ENCODE measurements at regions of chr12 and their contacts with region 1.

Region 1: GRCh38 chr12:111396726-111397445 is 8.8 kb upstream of the SH2B3 start:
- DNase-seq: peak; percentile 65
- ATAC-seq: peak; percentile 89
- H3K4me3 ChIP-seq: peak overlapping the region; percentile 33 to 48
- H3K27ac ChIP-seq: no peak overlapping the region
- H3K4me1 ChIP-seq: peaks cover 12 to 40% of the 10 kb centered on the region in 2 experiments; a peak in 3 of 4 replicates
- H3K27me3 ChIP-seq: no peaks in the 10 kb centered on the region
- CTCF ChIP-seq: peak in 2 of 3 experiments; percentile 96 to 99; a peak in 4 of 6 replicates
- POLR2A ChIP-seq: no peak
- RAD21 ChIP-seq: no peak

Region 2: DNA sequence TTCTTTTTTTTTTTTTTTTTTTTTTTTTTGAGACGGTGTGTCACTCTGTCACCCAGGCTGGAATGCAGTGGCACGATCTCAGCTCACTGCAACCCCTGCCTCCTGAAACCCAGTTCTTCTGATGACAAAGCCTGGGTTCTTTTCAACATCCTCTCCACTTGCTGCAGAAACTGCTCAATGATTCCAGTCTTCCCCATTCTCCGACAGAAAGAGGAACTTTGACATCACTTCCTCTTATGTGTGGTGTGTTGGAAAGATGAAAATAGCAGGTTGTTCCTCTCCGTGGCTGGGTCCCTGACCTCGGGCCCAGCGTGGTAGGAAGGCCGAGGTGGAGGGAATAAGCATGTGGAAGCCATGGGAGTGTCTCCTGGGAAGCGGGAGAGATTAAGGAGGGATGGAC is 226.3 kb before region 1 on chr12:
- CTCF ChIA-PET with region 1: no interaction called
- POLR2A ChIA-PET with region 1: no interaction called
- RAD21 ChIA-PET with region 1: no interaction called
- intact Hi-C with region 1: no loop called
- DNase-seq: no peak
- ATAC-seq: no peak
- H3K4me3 ChIP-seq: no peak overlapping the region
- H3K27ac ChIP-seq: no peak overlapping the region
- H3K4me1 ChIP-seq: no peaks in the 10 kb centered on the region
- H3K27me3 ChIP-seq: peaks cover 37% of the 10 kb centered on the region; the same call in 1 of the 2 replicates
- CTCF ChIP-seq: no peak
- POLR2A ChIP-seq: no peak
- RAD21 ChIP-seq: no peak

Region 3: DNA sequence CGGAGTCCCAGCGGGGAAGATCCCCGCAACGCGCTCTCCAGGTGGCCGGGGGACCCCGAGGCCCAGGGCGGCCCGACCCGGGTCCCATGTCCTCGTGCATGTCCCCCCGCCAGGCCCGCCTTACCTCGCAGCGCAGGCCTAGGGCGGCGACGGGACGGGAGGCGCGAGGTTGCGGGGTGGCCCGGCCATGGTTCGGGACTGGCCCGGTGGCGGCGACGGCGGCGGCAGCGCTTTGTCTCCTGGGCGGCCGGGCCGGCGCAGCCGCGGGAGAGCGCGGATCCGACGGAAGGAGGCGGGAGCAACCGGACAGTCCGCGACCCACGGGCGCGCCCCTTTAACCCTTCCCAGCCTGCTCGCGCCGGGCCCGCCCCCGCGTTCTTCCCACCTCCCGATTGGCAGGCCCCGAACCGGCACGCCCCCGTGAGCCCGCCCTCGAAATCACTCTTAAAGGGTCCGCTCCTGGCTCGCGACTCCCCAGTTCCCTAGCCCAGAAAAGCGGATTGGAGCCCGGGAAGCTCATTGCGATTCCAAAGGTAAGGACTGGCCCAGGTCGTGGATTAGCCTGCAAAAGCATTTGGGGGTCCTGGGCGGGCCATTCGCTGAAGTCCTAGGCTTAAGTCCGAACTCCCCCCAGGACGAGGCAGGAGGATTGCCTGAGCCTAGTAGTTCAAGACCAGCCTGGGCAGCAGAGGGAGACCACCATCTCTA is 27.9 kb before region 1 on chr12 and contains the start of gene PHETA1:
- CTCF ChIA-PET with region 1: interaction called, 11 read pairs
- POLR2A ChIA-PET with region 1: no interaction called
- RAD21 ChIA-PET with region 1: interaction called in 1 of 2 experiments, 8 read pairs
- intact Hi-C with region 1: no loop called
- DNase-seq: peak; percentile 55
- ATAC-seq: peak; percentile 91
- H3K4me3 ChIP-seq: peak within 1 kb of the TSS; percentile 73 to 83
- H3K27ac ChIP-seq: peak within 1 kb of the TSS; percentile 46; the same call in 1 of the 2 replicates
- H3K4me1 ChIP-seq: peaks cover 4 to 25% of the 10 kb centered on the region in 2 experiments; a peak in 3 of 4 replicates
- H3K27me3 ChIP-seq: no peaks in the 10 kb centered on the region
- CTCF ChIP-seq: no peak
- POLR2A ChIP-seq: no peak
- RAD21 ChIP-seq: no peak
- total RNA-seq, gene PHETA1: 10.6 TPM

Region 4: GRCh38 chr12:111412007-111412829 is 15.3 kb after region 1 on chr12:
- CTCF ChIA-PET with region 1: interaction called, 14 read pairs
- POLR2A ChIA-PET with region 1: no interaction called
- RAD21 ChIA-PET with region 1: no interaction called
- intact Hi-C with region 1: no loop called
- DNase-seq: no peak
- ATAC-seq: no peak
- H3K4me3 ChIP-seq: no peak overlapping the region
- H3K27ac ChIP-seq: no peak overlapping the region
- H3K4me1 ChIP-seq: peaks cover 29 to 69% of the 10 kb centered on the region in 2 experiments
- H3K27me3 ChIP-seq: no peaks in the 10 kb centered on the region
- CTCF ChIP-seq: no peak
- POLR2A ChIP-seq: no peak
- RAD21 ChIP-seq: no peak

Region 5: DNA sequence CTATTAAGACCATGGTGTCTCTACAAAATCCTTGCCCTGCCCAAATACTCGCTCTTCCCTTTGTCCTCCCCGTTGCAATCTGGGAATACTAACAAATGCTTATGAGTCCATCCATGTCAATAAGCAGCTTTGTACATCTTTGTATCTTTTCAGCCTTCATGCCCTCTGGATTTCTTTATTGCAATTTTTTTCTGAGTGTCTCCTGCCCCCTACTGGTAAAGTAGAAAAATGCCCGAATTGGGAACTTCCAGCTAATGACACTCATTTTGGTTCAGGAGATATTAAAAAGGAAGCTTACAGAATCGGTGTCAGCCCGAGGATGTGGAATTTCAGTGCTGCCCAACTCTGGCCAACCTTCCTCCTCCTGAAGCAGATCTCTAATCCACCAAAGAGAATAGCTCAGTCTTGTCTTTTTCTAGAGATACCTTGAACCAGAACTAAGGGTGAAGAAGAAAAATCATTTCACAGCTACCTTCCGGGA is 54.8 kb after region 1 on chr12:
- CTCF ChIA-PET with region 1: interaction called, 94 read pairs
- POLR2A ChIA-PET with region 1: interaction called, 8 read pairs
- RAD21 ChIA-PET with region 1: interaction called, 7 to 9 read pairs
- intact Hi-C with region 1: loop called (anchors 1 kb)
- DNase-seq: peak; percentile 24
- ATAC-seq: peak; percentile 61
- H3K4me3 ChIP-seq: no peak overlapping the region
- H3K27ac ChIP-seq: no peak overlapping the region
- H3K4me1 ChIP-seq: no peaks in the 10 kb centered on the region
- H3K27me3 ChIP-seq: no peaks in the 10 kb centered on the region
- CTCF ChIP-seq: peak; percentile 75 to 92 (median 81)
- POLR2A ChIP-seq: no peak
- RAD21 ChIP-seq: peak; percentile 85

Region 6: DNA sequence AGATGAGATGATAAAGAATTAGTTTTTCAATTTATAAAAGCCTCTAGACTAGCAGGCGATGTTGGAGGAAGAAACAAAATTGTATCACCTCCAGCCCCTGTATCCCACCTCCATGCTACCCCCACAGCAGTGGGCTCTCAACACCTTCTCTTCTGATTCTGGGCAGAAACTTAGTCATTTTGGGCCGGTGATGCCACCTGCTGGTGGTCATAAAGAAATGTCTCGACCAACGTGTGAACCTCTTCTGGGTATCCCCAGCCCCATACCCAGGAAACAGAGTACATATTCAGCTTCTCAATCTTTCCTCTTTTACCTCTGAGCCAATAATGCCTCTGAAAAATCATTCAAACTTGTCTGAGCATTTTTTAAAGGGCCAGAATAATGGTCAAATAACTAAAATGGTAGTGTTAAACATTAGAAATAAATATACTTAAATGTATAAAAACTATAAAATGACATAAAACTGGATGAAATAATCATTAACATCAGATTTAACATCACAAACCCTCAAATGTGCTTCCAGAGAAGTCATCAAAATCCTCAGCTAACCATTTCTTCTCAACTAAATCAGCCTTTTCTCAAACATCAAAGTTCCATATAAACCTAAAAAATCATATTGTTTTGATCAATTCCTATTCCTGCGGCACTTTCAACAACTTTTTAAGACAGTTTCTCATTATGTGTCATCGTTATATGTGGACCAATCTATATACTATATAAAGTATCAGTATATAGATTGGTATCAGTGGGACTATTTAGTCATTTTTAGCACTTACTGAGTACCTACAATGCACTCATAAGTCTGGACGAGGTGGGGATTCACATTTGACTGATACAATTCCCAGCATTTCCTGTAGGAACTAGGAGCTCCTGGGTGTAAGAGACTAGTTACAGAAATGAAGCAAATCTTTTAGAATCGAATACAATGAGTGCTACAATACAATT is 132.8 kb after region 1 on chr12:
- CTCF ChIA-PET with region 1: interaction called, 7 read pairs
- POLR2A ChIA-PET with region 1: no interaction called
- RAD21 ChIA-PET with region 1: no interaction called
- intact Hi-C with region 1: loop called (anchors 5 kb)
- DNase-seq: peak; percentile 34
- ATAC-seq: peak; percentile 92
- H3K4me3 ChIP-seq: no peak overlapping the region
- H3K27ac ChIP-seq: no peak overlapping the region
- H3K4me1 ChIP-seq: no peaks in the 10 kb centered on the region; a peak in 1 of 4 replicates
- H3K27me3 ChIP-seq: no peaks in the 10 kb centered on the region
- CTCF ChIP-seq: peak; percentile 60 to 77 (median 71); a peak in 5 of 6 replicates
- POLR2A ChIP-seq: no peak
- RAD21 ChIP-seq: peak; percentile 61

Region 7: GRCh38 chr12:111673503-111673902 is 276.6 kb after region 1 on chr12:
- CTCF ChIA-PET with region 1: interaction called, 11 read pairs
- POLR2A ChIA-PET with region 1: interaction called, 3 read pairs
- RAD21 ChIA-PET with region 1: interaction called in 1 of 2 experiments, 4 read pairs
- intact Hi-C with region 1: loop called (anchors 1 kb)
- DNase-seq: peak; percentile 33
- ATAC-seq: peak; percentile 67
- H3K4me3 ChIP-seq: no peak overlapping the region
- H3K27ac ChIP-seq: no peak overlapping the region
- H3K4me1 ChIP-seq: no peaks in the 10 kb centered on the region
- H3K27me3 ChIP-seq: no peaks in the 10 kb centered on the region
- CTCF ChIP-seq: peak; percentile 53 to 66 (median 56); a peak in 5 of 6 replicates
- POLR2A ChIP-seq: no peak
- RAD21 ChIP-seq: peak; percentile 76

Region 8: GRCh38 chr12:111812881-111813741 is 416.2 kb after region 1 on chr12:
- CTCF ChIA-PET with region 1: interaction called, 4 read pairs
- POLR2A ChIA-PET with region 1: no interaction called
- RAD21 ChIA-PET with region 1: no interaction called
- intact Hi-C with region 1: loop called (anchors 5 kb)
- DNase-seq: peak; percentile 76
- ATAC-seq: peak; percentile 98
- H3K4me3 ChIP-seq: no peak overlapping the region
- H3K27ac ChIP-seq: no peak overlapping the region
- H3K4me1 ChIP-seq: peaks cover 0 to 6% of the 10 kb centered on the region in 2 experiments; a peak in 2 of 4 replicates
- H3K27me3 ChIP-seq: no peaks in the 10 kb centered on the region
- CTCF ChIP-seq: peak; percentile 78 to 88 (median 82)
- POLR2A ChIP-seq: no peak
- RAD21 ChIP-seq: peak; percentile 87

Measured in HCT116 (cell line).